Ovary (tissue), 10 donors: ENCODE measurements at regions of chr11 and their contacts with region 1.

Region 1: GRCh38 chr11:123188508-123189165 is 6.4 kb downstream of the CLMP start:
- DNase-seq: no peak
- H3K4me3 ChIP-seq: no peak overlapping the region
- H3K27ac ChIP-seq: peak overlapping the region; percentile 44 to 47
- H3K4me1 ChIP-seq: peaks cover 5% of the 10 kb centered on the region
- H3K27me3 ChIP-seq: no peaks in the 10 kb centered on the region
- CTCF ChIP-seq: peak in 1 of 3 donors; percentile 18
- EP300 ChIP-seq: no peak
- POLR2A ChIP-seq: no peak

Region 2: GRCh38 chr11:123122341-123122740 is 66.3 kb before region 1 on chr11:
- intact Hi-C with region 1: loop called in 1 of 4 experiments (anchors 10 kb)
- DNase-seq: peak in 2 of 5 donors; percentile 38 to 75
- H3K4me3 ChIP-seq: no peak overlapping the region
- H3K27ac ChIP-seq: peak overlapping the region in 1 of 2 donors; percentile 46
- H3K4me1 ChIP-seq: peaks cover 2% of the 10 kb centered on the region
- H3K27me3 ChIP-seq: no peaks in the 10 kb centered on the region
- CTCF ChIP-seq: no peak
- EP300 ChIP-seq: no peak
- POLR2A ChIP-seq: no peak